Calu3 (cell line): ENCODE measurements at regions of chr17 and their contacts with region 1.

Region 1: DNA sequence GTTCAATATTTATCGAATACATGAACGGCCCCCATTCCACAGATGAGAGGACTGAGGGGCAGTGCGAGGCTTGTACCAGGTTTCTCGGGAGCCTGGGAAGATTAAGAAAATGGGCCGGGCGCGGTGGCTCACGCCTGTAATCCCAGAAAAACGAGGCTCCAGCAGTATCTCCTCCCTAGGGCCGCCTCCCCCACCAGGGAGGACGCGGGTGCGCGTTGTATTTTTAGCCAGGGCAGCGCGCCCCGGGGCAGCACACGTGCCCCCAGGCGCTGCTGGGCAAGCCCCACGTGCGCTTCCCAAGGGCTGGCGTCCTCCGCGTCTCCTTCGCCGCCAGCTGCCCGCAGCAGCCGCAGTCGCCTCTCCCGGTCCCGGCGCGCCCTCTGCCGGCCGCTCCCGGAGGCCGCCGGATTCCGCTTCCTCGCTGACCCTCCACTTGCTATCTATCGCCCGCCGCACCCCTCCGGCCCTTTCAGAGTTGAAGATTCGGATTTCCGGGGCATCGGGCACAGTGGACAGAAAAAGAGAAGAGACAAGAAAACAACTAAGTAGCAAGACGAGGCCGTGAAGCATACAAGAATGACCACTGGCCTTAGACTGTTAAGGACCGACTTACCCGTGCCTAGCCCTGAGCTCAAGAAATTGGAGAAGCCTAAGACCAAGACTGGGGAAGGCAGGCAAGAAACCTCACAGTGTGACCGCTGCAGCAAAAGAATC is 1.9 kb upstream of the YBX2 start:
- DNase-seq: peak; percentile 86
- H3K4me3 Mint-ChIP-seq: peak overlapping the region; percentile 52
- H3K27ac Mint-ChIP-seq: no peak overlapping the region
- H3K4me1 Mint-ChIP-seq: peaks cover 15% of the 10 kb centered on the region
- H3K27me3 Mint-ChIP-seq: peaks cover 24% of the 10 kb centered on the region
- CTCF ChIP-seq: peak; percentile 73

Region 2: GRCh38 chr17:7219812-7220581 is 76.3 kb before region 1 on chr17 and contains the starts of genes ACADVL and DLG4:
- CTCF ChIA-PET with region 1: interaction called, 11 read pairs
- intact Hi-C with region 1: no loop called
- DNase-seq: peak; percentile 84
- H3K4me3 Mint-ChIP-seq: peak within 1 kb of the TSS; percentile 96
- H3K27ac Mint-ChIP-seq: peak within 1 kb of the TSS; percentile 94
- H3K4me1 Mint-ChIP-seq: no peaks in the 10 kb centered on the region
- H3K27me3 Mint-ChIP-seq: peaks cover 14% of the 10 kb centered on the region
- CTCF ChIP-seq: no peak
- total RNA-seq, gene ACADVL: 552 and 615 TPM in 2 replicates
- total RNA-seq, gene DLG4: 2.0 and 4.6 TPM in 2 replicates

Region 3: GRCh38 chr17:7280519-7281429 is 15.6 kb before region 1 on chr17:
- CTCF ChIA-PET with region 1: interaction called, 14 read pairs
- intact Hi-C with region 1: loop called (anchors 2 kb)
- DNase-seq: peak; percentile 77
- H3K4me3 Mint-ChIP-seq: peak overlapping the region; percentile 75
- H3K27ac Mint-ChIP-seq: no peak overlapping the region
- H3K4me1 Mint-ChIP-seq: peaks cover 16% of the 10 kb centered on the region
- H3K27me3 Mint-ChIP-seq: peaks cover 14% of the 10 kb centered on the region
- CTCF ChIP-seq: peak; percentile 81

Region 4: GRCh38 chr17:7336240-7337175 is 40.2 kb after region 1 on chr17 and contains the start of gene ACAP1:
- CTCF ChIA-PET with region 1: no interaction called
- intact Hi-C with region 1: no loop called
- DNase-seq: no peak
- H3K4me3 Mint-ChIP-seq: no peak within 1 kb of the TSS
- H3K27ac Mint-ChIP-seq: no peak within 1 kb of the TSS
- H3K4me1 Mint-ChIP-seq: no peaks in the 10 kb centered on the region
- H3K27me3 Mint-ChIP-seq: peaks cover 27% of the 10 kb centered on the region
- CTCF ChIP-seq: no peak
- total RNA-seq, gene ACAP1: 4.1 TPM in 1 of 2 replicates, not detected in the other